ENCODE measurements at regions of chr4 and their contacts with region 1.

Region 1: GRCh38 chr4:145234091-145234706 is 53.8 kb upstream of the OTUD4 start:
- DNase-seq: peak; percentile 20 to 43 (median 41)
- H3K4me3 ChIP-seq: no peak overlapping the region
- H3K4me3 Mint-ChIP-seq: no peak overlapping the region
- H3K27ac ChIP-seq: no peak overlapping the region
- H3K27ac Mint-ChIP-seq: no peak overlapping the region
- H3K4me1 ChIP-seq: no peaks in the 10 kb centered on the region
- H3K4me1 Mint-ChIP-seq: no peaks in the 10 kb centered on the region
- H3K27me3 ChIP-seq: no peaks in the 10 kb centered on the region
- H3K27me3 Mint-ChIP-seq: peaks cover 0 to 1% (median 0%) of the 10 kb centered on the region in 3 donors
- CTCF ChIP-seq: peak; percentile 65

Region 2: GRCh38 chr4:145557720-145558119 is 323.5 kb after region 1 on chr4:
- intact Hi-C with region 1: loop called in 1 of 2 experiments (anchors 10 kb)
- DNase-seq: peak; percentile 29 to 50 (median 44)
- H3K4me3 ChIP-seq: no peak overlapping the region
- H3K4me3 Mint-ChIP-seq: no peak overlapping the region
- H3K27ac ChIP-seq: no peak overlapping the region
- H3K27ac Mint-ChIP-seq: no peak overlapping the region
- H3K4me1 ChIP-seq: no peaks in the 10 kb centered on the region
- H3K4me1 Mint-ChIP-seq: no peaks in the 10 kb centered on the region
- H3K27me3 ChIP-seq: no peaks in the 10 kb centered on the region
- H3K27me3 Mint-ChIP-seq: peaks cover 0 to 2% (median 0%) of the 10 kb centered on the region in 3 donors
- CTCF ChIP-seq: peak; percentile 96

Region 3: DNA sequence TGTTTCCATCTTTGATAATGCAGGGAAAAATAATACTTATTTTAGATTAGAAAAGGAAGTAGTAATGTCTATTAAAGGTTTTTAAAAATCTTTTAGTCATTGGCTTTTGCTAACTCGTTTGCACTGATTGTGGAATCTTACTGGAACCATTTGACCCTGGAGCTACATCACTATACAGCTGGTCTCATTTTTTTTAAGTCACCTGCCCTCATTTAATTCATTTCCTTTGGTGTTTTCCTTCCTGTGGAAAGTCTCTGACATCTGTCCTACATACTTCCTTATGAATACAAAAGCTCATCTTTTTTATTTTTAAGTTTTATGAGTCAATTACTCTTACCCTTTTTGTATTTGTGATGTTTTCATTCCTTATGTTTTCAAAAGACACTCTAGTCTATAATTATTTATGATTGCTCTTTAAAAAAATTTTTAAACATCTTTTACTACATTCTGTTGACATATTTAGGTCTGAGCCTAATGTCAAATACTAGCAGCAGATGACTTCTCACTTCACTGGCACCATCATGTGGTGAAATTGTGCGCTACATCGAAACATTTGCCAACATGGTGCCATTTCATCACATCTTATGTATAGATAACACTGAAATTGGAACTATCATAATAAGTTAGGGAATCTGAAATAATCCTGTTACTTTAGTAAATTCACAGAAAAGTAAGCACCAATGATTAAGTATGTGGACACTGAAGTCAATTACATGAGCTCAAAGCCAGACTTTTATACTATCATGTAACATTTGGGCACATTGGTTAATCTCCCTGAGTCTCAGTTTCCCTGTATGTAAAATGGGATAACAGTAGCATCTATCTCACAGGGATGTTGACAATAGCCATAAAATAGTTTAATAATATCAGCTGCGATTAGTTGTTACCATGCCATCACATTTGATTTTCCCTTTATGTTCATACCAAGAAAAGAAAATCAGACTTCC is 375.6 kb after region 1 on chr4:
- intact Hi-C with region 1: loop called in 1 of 2 experiments (anchors 5 kb)
- DNase-seq: peak; percentile 42 to 64 (median 55)
- H3K4me3 ChIP-seq: no peak overlapping the region
- H3K4me3 Mint-ChIP-seq: no peak overlapping the region
- H3K27ac ChIP-seq: no peak overlapping the region
- H3K27ac Mint-ChIP-seq: no peak overlapping the region
- H3K4me1 ChIP-seq: peaks cover 12% of the 10 kb centered on the region in 2 donors
- H3K4me1 Mint-ChIP-seq: peaks cover 14% of the 10 kb centered on the region
- H3K27me3 ChIP-seq: no peaks in the 10 kb centered on the region
- H3K27me3 Mint-ChIP-seq: peaks cover 0 to 3% (median 1%) of the 10 kb centered on the region in 3 donors
- CTCF ChIP-seq: peak; percentile 76